Heart right ventricle (tissue), 16 donors: ENCODE measurements at regions of chr10 and their contacts with region 1.

Region 1: DNA sequence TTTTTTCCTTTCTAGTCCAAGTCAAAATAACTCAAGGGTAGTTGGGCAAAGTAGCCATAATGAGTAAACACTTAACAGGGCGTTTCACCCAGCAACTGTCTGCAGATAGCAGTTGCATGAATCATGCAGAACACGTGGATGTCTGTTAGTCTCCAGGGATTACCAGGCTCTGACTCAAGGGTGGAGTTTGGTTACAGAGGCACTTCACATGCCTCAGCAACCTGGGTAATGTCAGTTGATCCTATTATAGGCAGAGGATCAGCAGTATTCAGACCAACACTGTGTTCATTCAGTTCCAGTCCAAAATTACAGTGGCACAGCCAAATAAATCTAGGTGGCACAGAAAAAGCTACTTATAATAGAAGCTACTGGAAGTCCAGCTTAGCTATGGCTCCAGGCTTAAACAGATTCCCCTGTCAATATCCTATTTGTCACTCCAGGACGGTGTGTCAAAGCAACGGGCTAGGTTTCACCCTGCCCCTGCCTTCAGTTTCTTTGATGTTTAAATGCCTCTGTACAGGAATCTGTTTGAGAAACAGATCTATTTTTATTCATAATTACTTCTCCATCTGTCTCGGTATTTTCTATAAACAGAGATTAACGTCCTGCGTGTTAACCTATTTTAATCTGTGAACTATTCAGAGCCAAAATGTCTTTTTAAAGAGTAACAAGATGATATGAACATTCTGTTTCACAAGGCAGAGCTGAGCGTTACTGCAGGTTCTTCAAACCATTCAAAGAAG is 162.7 kb upstream of the AKR1E2 start:
- DNase-seq: peak in 1 of 2 donors; percentile 88
- ATAC-seq: peak; percentile 84 to 95 (median 94)
- H3K4me3 ChIP-seq: peak overlapping the region in 5 of 10 donors; percentile 4 to 22 (median 13)
- H3K27ac ChIP-seq: peak overlapping the region; percentile 87 to 96 (median 92)
- H3K4me1 ChIP-seq: peaks cover 0 to 52% (median 36%) of the 10 kb centered on the region in 9 donors
- H3K27me3 ChIP-seq: no peaks in the 10 kb centered on the region
- CTCF ChIP-seq: no peak

Region 2: DNA sequence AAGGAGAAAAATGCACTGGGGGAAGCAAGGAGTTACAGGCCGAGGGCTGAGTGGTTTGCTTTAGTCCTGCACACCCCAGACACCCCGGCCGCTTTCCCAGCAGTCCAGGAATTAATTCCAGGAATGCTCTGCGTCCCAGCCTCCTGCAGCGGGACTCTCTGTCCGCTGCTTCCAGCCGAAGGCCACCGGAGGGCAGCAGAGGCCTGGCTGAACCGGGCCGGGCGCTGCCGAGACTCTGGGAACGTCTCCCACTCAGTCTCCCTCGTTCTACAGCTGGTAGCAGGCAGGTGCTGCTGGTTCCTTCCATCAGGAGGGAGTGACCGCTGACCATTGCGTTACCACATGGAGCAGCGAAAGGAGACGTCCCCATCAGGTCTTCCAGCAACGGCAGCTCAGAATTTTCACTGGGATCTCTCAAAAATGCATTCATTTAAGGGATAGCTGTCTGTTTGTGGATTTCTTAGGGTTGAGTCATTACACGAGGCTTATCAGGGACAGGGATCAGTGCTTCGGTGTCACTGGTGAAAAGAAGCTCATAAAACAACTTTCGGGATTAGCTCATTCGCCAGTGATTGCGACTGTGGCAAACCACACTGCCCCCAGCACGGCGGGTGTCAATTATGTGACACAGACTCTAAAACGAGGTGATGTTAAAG is 1465.9 kb before region 1 on chr10:
- intact Hi-C with region 1: loop called in 4 of 10 experiments (anchors 5 to 10 kb)
- DNase-seq: peak; percentile 77 to 83
- ATAC-seq: peak; percentile 88 to 95 (median 94)
- H3K4me3 ChIP-seq: peak overlapping the region in 9 of 10 donors; percentile 0 to 42 (median 30)
- H3K27ac ChIP-seq: peak overlapping the region in 5 of 10 donors; percentile 41 to 62 (median 43)
- H3K4me1 ChIP-seq: peaks cover 3 to 25% (median 9%) of the 10 kb centered on the region in 9 donors
- H3K27me3 ChIP-seq: peaks cover 0 to 21% (median 0%) of the 10 kb centered on the region in 7 donors
- CTCF ChIP-seq: peak in 8 of 9 donors; percentile 86 to 97 (median 93)

Region 3: DNA sequence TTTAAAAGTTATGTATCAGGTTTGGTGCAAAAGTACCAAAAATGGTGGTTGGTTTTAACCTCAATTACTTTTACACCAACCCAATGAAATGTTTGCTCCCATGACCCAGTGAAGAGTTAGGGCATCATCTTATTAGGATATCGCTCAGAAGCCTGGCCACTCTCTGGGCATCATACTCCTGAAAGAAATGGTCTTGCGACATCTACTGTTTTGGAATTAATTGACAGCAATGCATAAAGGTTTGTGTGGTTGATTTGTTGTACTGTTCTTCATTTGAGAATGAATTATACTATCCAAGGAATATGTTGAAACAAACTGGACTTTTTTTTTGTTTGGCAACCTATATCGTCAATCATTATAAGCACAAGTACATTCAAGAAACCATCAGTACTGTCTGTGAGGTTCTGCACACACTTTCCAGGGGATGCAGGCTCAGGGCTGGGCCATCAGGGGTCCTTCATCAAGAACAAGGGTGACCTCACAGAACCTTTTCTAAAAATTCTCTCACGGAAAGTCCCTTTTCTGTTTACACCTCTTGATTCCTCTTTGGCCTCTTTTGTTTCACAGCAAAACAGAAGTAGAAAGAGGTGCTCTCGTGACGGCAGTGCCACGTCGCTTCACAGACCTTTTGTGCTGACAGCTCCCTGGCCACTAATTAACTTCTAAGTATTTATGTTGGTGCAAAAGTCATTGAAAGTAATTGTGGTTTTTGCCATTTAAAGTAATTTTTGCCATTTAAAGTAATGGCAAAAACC is 761.1 kb before region 1 on chr10:
- intact Hi-C with region 1: loop called in 1 of 10 experiments (anchors 10 kb)
- DNase-seq: no peak
- ATAC-seq: peak; percentile 44 to 80 (median 72)
- H3K4me3 ChIP-seq: no peak overlapping the region
- H3K27ac ChIP-seq: peak overlapping the region in 7 of 10 donors; percentile 25 to 74 (median 44)
- H3K4me1 ChIP-seq: peaks cover 0 to 23% (median 12%) of the 10 kb centered on the region in 9 donors
- H3K27me3 ChIP-seq: no peaks in the 10 kb centered on the region
- CTCF ChIP-seq: peak in 4 of 9 donors; percentile 7 to 32 (median 22)

Region 4: DNA sequence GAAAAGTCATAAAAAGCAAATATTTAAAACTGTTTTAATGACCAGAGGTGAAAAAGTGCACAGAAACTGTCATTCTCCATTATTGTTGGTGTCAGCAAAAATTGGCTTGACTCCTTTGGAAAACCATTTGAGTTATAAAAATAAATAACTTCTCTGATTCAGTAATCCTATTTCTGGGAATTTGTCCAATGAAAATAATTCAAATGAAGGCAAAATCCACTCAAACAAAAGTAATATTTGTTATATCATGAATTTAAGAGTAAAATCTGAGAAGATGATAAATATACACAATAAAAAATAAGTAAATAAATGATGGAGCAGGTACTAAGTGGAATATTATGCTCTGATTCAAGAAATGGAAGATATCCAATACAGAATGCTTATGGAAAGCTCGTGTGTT is 551.7 kb before region 1 on chr10:
- intact Hi-C with region 1: no loop called
- DNase-seq: no peak
- ATAC-seq: no peak
- H3K4me3 ChIP-seq: no peak overlapping the region
- H3K27ac ChIP-seq: no peak overlapping the region
- H3K4me1 ChIP-seq: peaks cover 0 to 30% (median 16%) of the 10 kb centered on the region in 9 donors
- H3K27me3 ChIP-seq: no peaks in the 10 kb centered on the region
- CTCF ChIP-seq: no peak

Region 5: GRCh38 chr10:4512671-4513240 is 150.6 kb before region 1 on chr10:
- intact Hi-C with region 1: loop called in 9 of 10 experiments (anchors 2 to 10 kb)
- DNase-seq: peak; percentile 40 to 58
- ATAC-seq: peak; percentile 49 to 94 (median 76)
- H3K4me3 ChIP-seq: no peak overlapping the region
- H3K27ac ChIP-seq: peak overlapping the region in 9 of 10 donors; percentile 2 to 90 (median 77)
- H3K4me1 ChIP-seq: peaks cover 0 to 48% (median 34%) of the 10 kb centered on the region in 9 donors
- H3K27me3 ChIP-seq: no peaks in the 10 kb centered on the region
- CTCF ChIP-seq: peak; percentile 21 to 71 (median 56)

Region 6: DNA sequence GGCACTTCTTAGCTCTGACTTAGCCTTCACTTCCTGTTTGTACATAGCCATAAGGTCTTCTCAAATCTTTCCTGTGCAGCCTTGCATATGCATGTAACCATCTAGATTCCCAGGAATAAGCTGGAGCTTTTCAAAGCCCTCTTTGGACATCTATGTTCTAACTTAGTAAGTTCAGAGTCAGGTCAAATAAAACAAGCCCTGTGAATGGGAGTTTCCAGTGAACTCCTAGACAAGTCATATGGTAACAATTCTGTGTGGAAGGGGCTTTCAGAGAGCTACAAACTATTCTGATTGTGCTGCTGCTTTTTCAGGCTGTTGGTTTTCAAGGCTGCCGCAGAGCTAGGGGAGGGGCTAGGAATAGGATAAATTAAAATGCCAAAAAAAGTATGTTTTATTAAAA is 45.7 kb before region 1 on chr10:
- intact Hi-C with region 1: no loop called
- DNase-seq: no peak
- ATAC-seq: no peak
- H3K4me3 ChIP-seq: no peak overlapping the region
- H3K27ac ChIP-seq: no peak overlapping the region
- H3K4me1 ChIP-seq: no peaks in the 10 kb centered on the region
- H3K27me3 ChIP-seq: no peaks in the 10 kb centered on the region
- CTCF ChIP-seq: no peak

Region 7: DNA sequence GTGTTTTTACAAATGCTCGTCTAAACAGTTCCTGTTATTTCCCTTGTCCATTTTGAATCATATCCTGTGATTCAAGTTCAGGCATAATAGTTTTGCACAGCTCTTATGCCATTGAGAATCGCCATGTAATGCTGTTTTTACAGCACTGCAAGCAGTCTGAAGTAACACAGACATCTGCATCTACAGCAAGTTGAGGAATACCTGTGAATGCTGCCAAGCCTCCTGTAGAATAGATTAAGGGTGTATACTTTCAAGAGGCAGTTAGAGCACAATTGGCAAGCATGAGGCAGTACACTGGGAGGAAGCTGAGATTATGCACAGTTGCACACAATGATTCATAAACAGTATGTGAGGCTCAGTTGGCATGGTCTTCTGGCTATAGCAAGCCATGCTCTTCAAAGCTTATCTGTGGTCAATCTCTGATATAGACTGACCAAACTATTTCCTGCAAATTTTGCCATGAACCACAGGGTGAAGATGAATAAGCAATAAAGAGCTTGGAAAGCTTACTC is 40.8 kb after region 1 on chr10:
- intact Hi-C with region 1: loop called in 1 of 10 experiments (anchors 5 kb)
- DNase-seq: peak in 1 of 2 donors; percentile 61
- ATAC-seq: peak; percentile 80 to 97 (median 92)
- H3K4me3 ChIP-seq: no peak overlapping the region
- H3K27ac ChIP-seq: peak overlapping the region in 9 of 10 donors; percentile 28 to 78 (median 72)
- H3K4me1 ChIP-seq: peaks cover 0 to 30% (median 16%) of the 10 kb centered on the region in 9 donors
- H3K27me3 ChIP-seq: peaks cover 0 to 4% (median 0%) of the 10 kb centered on the region in 7 donors
- CTCF ChIP-seq: no peak